Left ventricle myocardium superior (tissue), 1 donor: ENCODE measurements at regions of chr21 and their contacts with region 1.

Region 1: GRCh38 chr21:31198575-31198974 is 145.5 kb downstream of the TIAM1 start:
- DNase-seq: no peak
- ATAC-seq: peak; percentile 31

Region 2: GRCh38 chr21:31604591-31605190 is 406.1 kb after region 1 on chr21:
- intact Hi-C with region 1: loop called (anchors 5 kb)
- DNase-seq: peak; percentile 83
- ATAC-seq: peak; percentile 60